ENCODE measurements at regions of chr4 and their contacts with region 1.

Region 1: DNA sequence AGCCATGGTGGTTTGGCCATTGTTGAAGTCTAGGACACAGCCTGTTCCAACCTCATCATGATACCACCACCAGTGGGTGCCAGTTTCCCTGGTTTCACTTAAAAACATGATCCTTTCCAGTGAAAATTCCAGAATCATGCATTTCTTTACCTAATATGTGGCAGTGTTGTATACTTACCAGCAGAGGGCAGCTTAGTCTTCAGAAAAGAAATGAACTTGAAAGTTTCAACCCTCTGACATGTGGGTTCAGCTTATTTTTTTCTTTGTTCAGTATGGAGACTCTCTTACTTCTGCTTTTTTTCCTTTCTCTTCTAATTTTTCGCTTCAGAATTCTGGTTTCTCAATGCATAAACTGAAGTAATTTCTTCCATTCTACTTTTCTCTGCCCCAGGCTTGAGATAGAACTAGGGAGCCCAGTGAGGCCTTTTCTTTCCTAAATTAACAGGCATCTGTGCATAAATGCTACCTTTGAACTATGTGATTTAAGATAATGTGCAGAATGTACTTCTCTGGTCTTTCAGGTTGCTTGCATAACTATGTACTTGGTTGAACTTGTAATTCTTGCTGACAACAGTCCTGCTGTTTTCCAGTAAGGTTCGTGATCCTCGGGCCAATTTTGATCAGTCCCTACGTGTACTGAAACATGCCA is 10.7 kb downstream of the LIAS start:
- DNase-seq: peak; percentile 30
- ATAC-seq: peak; percentile 77
- H3K4me3 Mint-ChIP-seq: no peak overlapping the region
- H3K27ac Mint-ChIP-seq: peak overlapping the region; percentile 48
- H3K4me1 Mint-ChIP-seq: peaks cover 9% of the 10 kb centered on the region
- H3K27me3 Mint-ChIP-seq: no peaks in the 10 kb centered on the region

Region 2: GRCh38 chr4:38920186-38920585 is 549.4 kb before region 1 on chr4:
- CTCF ChIA-PET with region 1: no interaction called
- POLR2A ChIA-PET with region 1: no interaction called
- DNase-seq: no peak
- ATAC-seq: no peak
- H3K4me3 Mint-ChIP-seq: no peak overlapping the region
- H3K27ac Mint-ChIP-seq: no peak overlapping the region
- H3K4me1 Mint-ChIP-seq: peaks cover 6% of the 10 kb centered on the region
- H3K27me3 Mint-ChIP-seq: peaks cover 3% of the 10 kb centered on the region

Region 3: DNA sequence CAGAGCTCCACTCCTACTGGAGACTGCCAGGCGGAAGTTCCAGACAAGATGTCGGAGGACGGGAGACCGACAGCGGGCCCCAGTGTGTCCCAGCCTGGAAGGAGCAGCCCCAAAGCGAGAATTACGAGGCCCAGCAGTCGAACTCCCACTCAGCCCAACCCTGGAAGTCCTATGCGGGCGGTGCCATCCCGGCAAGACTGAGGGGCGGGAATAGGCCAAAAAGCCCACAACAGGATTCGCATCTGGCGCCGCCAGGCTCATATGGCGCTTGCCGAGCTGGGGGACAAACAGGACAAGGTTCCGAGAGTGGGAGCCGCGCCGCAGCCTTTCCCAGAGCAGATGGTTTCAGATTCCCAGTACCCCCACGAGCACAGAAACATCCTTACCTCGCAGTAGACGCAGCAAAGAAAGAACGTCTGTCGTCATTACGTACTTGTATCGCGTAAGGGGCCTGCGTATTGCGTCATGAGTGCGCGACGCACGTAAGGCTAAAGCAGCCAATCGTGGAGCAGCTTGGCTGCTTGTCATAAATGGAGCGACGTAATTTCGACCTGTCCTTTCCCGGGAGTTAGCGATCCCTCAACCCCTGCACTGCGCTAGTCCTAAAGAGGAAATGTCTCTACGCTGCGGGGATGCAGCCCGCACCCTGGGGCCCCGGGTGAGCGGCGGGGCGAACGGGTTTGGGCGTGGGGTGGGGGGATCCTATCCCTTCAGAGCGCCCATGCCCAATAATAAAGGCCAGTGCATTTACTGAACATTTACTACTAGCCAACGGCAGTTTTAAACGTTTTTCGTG is 10.8 kb before region 1 on chr4 and contains the starts of genes LIAS and RPL9:
- CTCF ChIA-PET with region 1: interaction called, 32 read pairs
- POLR2A ChIA-PET with region 1: interaction called, 9 read pairs
- DNase-seq: peak; percentile 95
- ATAC-seq: peak; percentile 89
- H3K4me3 Mint-ChIP-seq: peak within 1 kb of the TSS; percentile 91
- H3K27ac Mint-ChIP-seq: peak within 1 kb of the TSS; percentile 97
- H3K4me1 Mint-ChIP-seq: peaks cover 56% of the 10 kb centered on the region
- H3K27me3 Mint-ChIP-seq: no peaks in the 10 kb centered on the region
- total RNA-seq, gene LIAS: 15.3 to 16.1 TPM
- total RNA-seq, gene RPL9: 1,107 to 1,219 TPM

Region 4: GRCh38 chr4:39480902-39481695 is 11.5 kb after region 1 on chr4:
- CTCF ChIA-PET with region 1: interaction called, 13 read pairs
- POLR2A ChIA-PET with region 1: no interaction called
- DNase-seq: no peak
- ATAC-seq: no peak
- H3K4me3 Mint-ChIP-seq: no peak overlapping the region
- H3K27ac Mint-ChIP-seq: no peak overlapping the region
- H3K4me1 Mint-ChIP-seq: no peaks in the 10 kb centered on the region
- H3K27me3 Mint-ChIP-seq: no peaks in the 10 kb centered on the region

Region 5: GRCh38 chr4:39502019-39502663 is 32.6 kb after region 1 on chr4:
- CTCF ChIA-PET with region 1: no interaction called
- POLR2A ChIA-PET with region 1: no interaction called
- DNase-seq: no peak
- ATAC-seq: no peak
- H3K4me3 Mint-ChIP-seq: no peak overlapping the region
- H3K27ac Mint-ChIP-seq: no peak overlapping the region
- H3K4me1 Mint-ChIP-seq: no peaks in the 10 kb centered on the region
- H3K27me3 Mint-ChIP-seq: no peaks in the 10 kb centered on the region

Region 6: GRCh38 chr4:39638354-39639240 is 169.0 kb after region 1 on chr4 and contains the start of gene SMIM14:
- CTCF ChIA-PET with region 1: interaction called, 19 read pairs
- POLR2A ChIA-PET with region 1: interaction called, 3 read pairs
- DNase-seq: peak; percentile 88
- ATAC-seq: peak; percentile 85
- H3K4me3 Mint-ChIP-seq: peak within 1 kb of the TSS; percentile 91
- H3K27ac Mint-ChIP-seq: peak within 1 kb of the TSS; percentile 43
- H3K4me1 Mint-ChIP-seq: peaks cover 33% of the 10 kb centered on the region
- H3K27me3 Mint-ChIP-seq: peaks cover 12% of the 10 kb centered on the region
- total RNA-seq, gene SMIM14: 2.0 to 2.5 TPM

Region 7: GRCh38 chr4:39657465-39657864 is 187.9 kb after region 1 on chr4:
- CTCF ChIA-PET with region 1: interaction called, 17 read pairs
- POLR2A ChIA-PET with region 1: no interaction called
- DNase-seq: no peak
- ATAC-seq: no peak
- H3K4me3 Mint-ChIP-seq: no peak overlapping the region
- H3K27ac Mint-ChIP-seq: no peak overlapping the region
- H3K4me1 Mint-ChIP-seq: peaks cover 5% of the 10 kb centered on the region
- H3K27me3 Mint-ChIP-seq: no peaks in the 10 kb centered on the region

Region 8: GRCh38 chr4:39976141-39976750 is 506.7 kb after region 1 on chr4:
- CTCF ChIA-PET with region 1: interaction called, 21 read pairs
- POLR2A ChIA-PET with region 1: no interaction called
- DNase-seq: peak; percentile 79
- ATAC-seq: peak; percentile 32
- H3K4me3 Mint-ChIP-seq: peak overlapping the region; percentile 94
- H3K27ac Mint-ChIP-seq: peak overlapping the region; percentile 86
- H3K4me1 Mint-ChIP-seq: peaks cover 46% of the 10 kb centered on the region
- H3K27me3 Mint-ChIP-seq: no peaks in the 10 kb centered on the region

Measured in activated CD8-positive, alpha-beta T cell treated with anti-CD3 and anti-CD28 coated beads, Interleukin-2, amount 10 ng/mL, durations not matched to agents 7 days and 5 days (primary cell).